ENCODE measurements at regions of chr2 and their contacts with region 1.

Region 1: GRCh38 chr2:28406276-28407096 is 13.8 kb downstream of the FOSL2 start:
- DNase-seq: peak in 4 of 5 donors; percentile 48 to 80 (median 57)
- ATAC-seq: peak in 3 of 4 donors; percentile 23 to 64 (median 27)
- H3K4me3 ChIP-seq: peak overlapping the region in 1 of 12 donors; percentile 12
- H3K27ac ChIP-seq: peak overlapping the region in 9 of 12 donors; percentile 7 to 87 (median 28)
- H3K4me1 ChIP-seq: peaks cover 0 to 98% (median 40%) of the 10 kb centered on the region in 12 donors
- H3K27me3 ChIP-seq: no peaks in the 10 kb centered on the region
- CTCF ChIP-seq: no peak
- POLR2A ChIP-seq: no peak

Region 2: DNA sequence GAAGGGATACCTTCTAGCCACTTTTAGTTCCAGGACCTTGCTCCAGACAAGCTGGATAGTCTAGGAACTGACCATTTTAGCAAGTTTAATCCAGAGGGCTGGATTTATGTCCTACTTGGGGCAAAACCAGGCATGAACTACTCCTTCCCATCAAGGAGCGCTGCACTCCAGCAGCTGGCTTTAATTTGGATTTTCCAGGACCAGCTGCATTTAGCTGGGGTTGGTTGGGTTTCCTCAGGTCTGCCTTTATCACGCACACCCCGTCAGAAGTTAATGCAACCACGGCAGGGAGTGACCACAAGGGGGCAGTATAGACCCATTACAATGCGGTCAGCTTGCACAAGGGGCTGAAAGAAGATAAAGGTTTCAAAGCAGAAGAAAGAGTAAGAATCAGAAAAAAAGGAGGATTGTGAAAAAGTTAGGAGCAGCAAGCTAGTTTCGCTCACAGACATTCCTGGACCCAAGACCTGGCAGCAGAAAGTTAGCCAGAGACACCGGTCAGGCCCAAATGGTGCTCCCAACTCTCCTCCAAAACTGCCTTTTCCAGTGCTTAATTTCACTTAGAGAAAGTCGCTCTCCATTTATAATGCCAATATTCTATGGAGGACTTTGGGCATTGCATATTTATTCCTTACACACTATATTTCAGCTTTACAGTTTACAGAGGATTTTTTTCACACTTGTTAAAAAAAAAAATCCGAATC is 702.7 kb before region 1 on chr2:
- intact Hi-C with region 1: loop called in 2 of 10 experiments (anchors 5 kb)
- DNase-seq: peak; percentile 74 to 83 (median 79)
- ATAC-seq: peak; percentile 48 to 66 (median 56)
- H3K4me3 ChIP-seq: no peak overlapping the region
- H3K27ac ChIP-seq: peak overlapping the region in 2 of 12 donors; percentile 8 to 82
- H3K4me1 ChIP-seq: peaks cover 0 to 42% (median 26%) of the 10 kb centered on the region in 12 donors
- H3K27me3 ChIP-seq: no peaks in the 10 kb centered on the region
- CTCF ChIP-seq: peak; percentile 89 to 97 (median 94)
- POLR2A ChIP-seq: no peak